CD14-positive monocyte (primary cell): ENCODE measurements at regions of chr1 and their contacts with region 1.

Region 1: DNA sequence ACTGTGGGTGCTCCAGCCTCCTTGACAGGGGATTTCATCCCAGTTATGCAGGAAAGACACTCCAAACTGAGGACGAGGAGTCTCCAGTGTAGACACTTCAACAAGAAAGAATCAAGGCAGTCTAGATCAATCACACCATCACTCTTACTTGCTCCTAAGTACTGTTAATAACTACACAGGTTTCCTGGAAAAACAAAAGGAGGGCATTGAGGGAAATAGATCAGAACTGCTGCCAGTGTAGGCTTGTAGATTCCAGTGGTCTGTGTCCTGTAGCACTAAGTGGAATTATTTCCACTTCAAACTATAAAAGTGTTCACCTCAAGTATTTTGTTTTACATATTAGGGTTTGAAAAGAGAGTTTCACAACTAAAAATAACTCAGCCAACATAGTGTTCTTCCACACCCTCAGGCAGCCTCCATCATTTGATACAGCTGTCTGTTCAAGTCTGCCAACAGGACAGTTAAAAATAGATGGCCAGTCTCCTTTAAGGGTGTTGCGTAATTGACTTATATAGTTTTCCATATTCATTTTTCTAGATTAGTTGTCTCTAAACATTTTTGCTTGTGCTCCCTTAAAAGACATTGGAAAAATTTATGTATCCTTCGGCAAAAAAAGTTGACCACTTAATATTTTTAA is 32.0 kb upstream of the AGL start:
- DNase-seq: no peak
- H3K4me3 ChIP-seq: no peak overlapping the region
- H3K4me3 Mint-ChIP-seq: no peak overlapping the region
- H3K27ac ChIP-seq: no peak overlapping the region
- H3K27ac Mint-ChIP-seq: no peak overlapping the region
- H3K4me1 ChIP-seq: no peaks in the 10 kb centered on the region
- H3K4me1 Mint-ChIP-seq: peaks cover 8% of the 10 kb centered on the region
- H3K27me3 ChIP-seq: no peaks in the 10 kb centered on the region
- H3K27me3 Mint-ChIP-seq: peaks cover 0 to 1% (median 0%) of the 10 kb centered on the region in 3 donors
- CTCF ChIP-seq: no peak

Region 2: DNA sequence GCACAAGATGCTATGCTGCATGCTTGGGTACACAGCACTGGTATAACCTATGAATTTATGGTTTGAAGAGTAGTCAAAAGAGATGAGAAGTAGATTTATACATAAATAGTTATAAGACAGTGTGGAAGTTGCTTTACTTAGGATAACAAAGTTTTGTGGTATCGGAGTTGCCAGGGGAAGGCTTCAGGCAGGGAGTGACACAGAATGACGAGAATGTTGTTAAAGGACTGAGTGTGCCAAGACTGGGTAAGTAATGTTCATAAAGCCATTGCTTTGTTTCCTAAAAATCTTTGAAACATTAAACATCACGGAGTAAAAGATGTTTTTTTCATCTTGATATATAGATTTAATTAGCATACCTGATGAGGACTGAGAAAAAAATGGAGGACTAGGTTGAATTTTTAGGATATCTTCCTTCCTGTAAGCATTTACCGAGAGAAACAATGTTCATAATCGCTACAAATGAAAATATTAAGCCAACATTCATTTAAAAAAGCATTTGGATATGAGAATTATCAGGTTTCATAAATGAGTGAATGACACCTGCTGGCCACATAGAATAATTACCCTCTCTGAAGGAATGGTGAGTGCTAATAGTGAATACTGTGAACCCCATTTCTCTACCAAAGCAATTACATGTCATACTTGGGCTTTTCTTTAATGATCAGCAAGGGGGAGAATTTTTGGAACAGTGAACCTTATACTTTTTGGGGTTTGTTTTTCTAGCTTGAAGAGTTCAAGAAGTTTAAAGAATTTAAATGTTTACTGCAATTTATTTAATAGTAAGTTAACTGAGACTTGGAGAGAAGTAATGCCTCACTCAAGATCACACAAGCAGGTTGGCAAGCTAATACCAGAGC is 1048.1 kb after region 1 on chr1:
- intact Hi-C with region 1: loop called in 1 of 2 experiments (anchors 5 kb)
- DNase-seq: peak; percentile 2 to 25 (median 9)
- H3K4me3 ChIP-seq: no peak overlapping the region
- H3K4me3 Mint-ChIP-seq: no peak overlapping the region
- H3K27ac ChIP-seq: no peak overlapping the region
- H3K27ac Mint-ChIP-seq: no peak overlapping the region
- H3K4me1 ChIP-seq: no peaks in the 10 kb centered on the region
- H3K4me1 Mint-ChIP-seq: no peaks in the 10 kb centered on the region
- H3K27me3 ChIP-seq: no peaks in the 10 kb centered on the region
- H3K27me3 Mint-ChIP-seq: no peaks in the 10 kb centered on the region
- CTCF ChIP-seq: peak; percentile 69